Mammary epithelial cell (primary cell): ENCODE measurements at regions of chr18 and their contacts with region 1.

Region 1: GRCh38 chr18:49021433-49022129 is 70.8 kb upstream of the SMAD7 start:
- DNase-seq: peak; percentile 84
- H3K4me3 ChIP-seq: no peak overlapping the region
- H3K27ac ChIP-seq: no peak overlapping the region
- H3K4me1 ChIP-seq: peaks cover 27% of the 10 kb centered on the region
- H3K27me3 ChIP-seq: no peaks in the 10 kb centered on the region
- CTCF ChIP-seq: peak; percentile 28 to 44

Region 2: GRCh38 chr18:48868468-48869466 is 152.8 kb before region 1 on chr18:
- CTCF ChIA-PET with region 1: no interaction called
- dilution Hi-C with region 1: no loop called
- in situ Hi-C with region 1: no loop called
- intact Hi-C with region 1: no loop called
- DNase-seq: peak; percentile 5
- H3K4me3 ChIP-seq: no peak overlapping the region
- H3K27ac ChIP-seq: no peak overlapping the region
- H3K4me1 ChIP-seq: peaks cover 13% of the 10 kb centered on the region
- H3K27me3 ChIP-seq: no peaks in the 10 kb centered on the region
- CTCF ChIP-seq: no peak

Region 3: DNA sequence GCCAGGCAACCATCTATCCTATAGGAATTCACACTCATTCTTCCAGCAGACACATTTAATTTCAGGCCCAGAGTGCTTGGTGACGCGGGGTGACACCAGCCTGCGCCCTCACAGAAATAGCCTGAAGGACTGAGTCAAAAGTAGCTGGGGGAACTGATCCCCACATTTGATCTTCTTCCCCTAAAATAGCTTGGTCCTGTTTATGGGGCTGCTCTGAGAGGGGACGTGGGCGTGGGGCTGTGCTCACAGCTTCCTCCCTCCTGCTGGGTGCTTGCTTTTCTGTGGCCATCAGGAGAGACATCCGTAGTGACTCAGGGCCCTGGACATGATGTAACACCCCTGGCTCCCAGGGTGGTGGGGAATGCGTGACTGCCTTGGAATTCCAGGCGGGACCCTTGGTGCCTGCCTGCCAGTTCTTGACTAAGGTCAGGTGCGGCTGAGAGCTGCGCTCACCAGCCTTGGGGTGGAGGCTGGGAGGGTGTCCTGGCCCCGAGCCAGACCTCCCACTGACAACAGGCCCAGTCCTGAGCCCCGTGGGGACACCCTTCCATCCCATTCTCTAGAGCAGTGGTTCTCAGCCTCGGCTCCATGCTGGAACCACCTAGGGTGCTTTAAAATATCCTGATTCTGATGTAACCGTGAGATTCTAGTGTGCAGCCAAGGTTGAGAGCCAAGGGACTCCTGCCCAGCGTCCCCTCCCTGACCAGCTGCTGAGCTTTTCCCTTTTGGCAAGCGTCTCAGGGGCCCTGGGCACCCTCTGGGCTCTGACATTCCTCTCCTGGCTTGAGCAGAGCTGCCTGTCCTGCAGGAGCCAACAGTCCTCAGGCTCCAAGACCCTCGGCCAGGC is 23.4 kb before region 1 on chr18:
- CTCF ChIA-PET with region 1: no interaction called
- dilution Hi-C with region 1: no loop called
- in situ Hi-C with region 1: no loop called
- intact Hi-C with region 1: loop called (anchors 2 kb)
- DNase-seq: peak; percentile 96
- H3K4me3 ChIP-seq: no peak overlapping the region
- H3K27ac ChIP-seq: peak overlapping the region; percentile 90
- H3K4me1 ChIP-seq: peaks cover 25% of the 10 kb centered on the region
- H3K27me3 ChIP-seq: no peaks in the 10 kb centered on the region
- CTCF ChIP-seq: no peak

Region 4: DNA sequence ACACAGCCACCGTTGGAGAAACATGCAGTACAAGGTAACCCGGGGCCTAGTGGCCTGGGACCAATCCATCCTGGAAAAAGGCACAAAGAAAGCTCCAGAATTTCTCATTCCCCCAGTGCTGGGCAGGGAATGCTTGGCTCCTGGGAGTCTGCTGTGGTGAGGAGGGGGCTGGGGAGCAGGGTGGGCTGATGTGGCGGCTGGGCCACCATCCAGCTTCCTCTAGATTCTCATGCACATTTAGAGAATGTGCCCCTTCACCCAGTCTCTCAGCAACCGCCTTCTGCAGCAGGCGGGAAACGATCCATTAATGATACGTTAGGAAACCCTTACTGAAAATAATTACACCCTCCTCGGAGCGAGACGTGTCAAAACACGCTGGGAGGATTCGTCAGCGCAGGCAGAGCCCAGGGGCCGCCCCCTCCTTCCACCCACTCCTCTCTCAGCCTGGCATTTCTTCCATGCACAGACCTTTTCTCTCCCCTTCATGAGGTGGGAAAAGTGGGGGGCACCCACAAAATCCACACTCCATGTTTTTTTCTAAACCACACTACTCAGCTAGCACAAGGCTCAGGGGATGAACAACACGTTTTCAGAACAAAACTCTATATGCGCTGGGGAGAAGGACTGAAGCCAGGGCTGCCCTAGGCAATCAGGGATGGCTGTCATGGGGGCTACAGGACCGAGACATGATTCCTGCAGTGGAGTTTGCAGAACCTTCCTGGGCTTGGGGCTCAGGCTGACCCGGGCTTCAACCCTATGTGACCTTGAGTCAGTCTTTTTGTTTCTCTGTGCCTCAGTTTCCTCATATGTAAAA is 14.7 kb before region 1 on chr18:
- CTCF ChIA-PET with region 1: no interaction called
- dilution Hi-C with region 1: no loop called
- in situ Hi-C with region 1: no loop called
- intact Hi-C with region 1: loop called (anchors 1 kb)
- DNase-seq: peak; percentile 74
- H3K4me3 ChIP-seq: no peak overlapping the region
- H3K27ac ChIP-seq: peak overlapping the region; percentile 4
- H3K4me1 ChIP-seq: peaks cover 13% of the 10 kb centered on the region
- H3K27me3 ChIP-seq: no peaks in the 10 kb centered on the region
- CTCF ChIP-seq: no peak

Region 5: DNA sequence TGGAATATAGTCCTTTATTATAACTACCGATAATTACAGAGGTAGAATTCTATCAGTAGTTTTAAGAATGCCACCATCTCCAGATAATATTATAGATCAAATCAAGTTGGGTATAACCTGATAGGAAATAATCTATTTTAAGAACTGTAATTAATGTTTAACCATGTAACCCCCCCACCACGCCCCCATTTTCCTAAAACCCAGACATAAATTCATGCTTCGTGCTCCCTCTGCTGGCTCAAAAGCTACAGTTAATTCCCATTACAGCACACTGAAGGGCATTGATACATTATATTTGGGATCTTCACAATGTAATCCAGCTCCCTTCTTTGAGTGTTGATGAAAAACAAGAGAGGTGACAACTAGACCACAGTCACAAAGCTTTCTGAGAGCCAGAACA is 157.2 kb after region 1 on chr18:
- CTCF ChIA-PET with region 1: no interaction called
- dilution Hi-C with region 1: no loop called
- in situ Hi-C with region 1: no loop called
- intact Hi-C with region 1: loop called (anchors 10 kb)
- DNase-seq: no peak
- H3K4me3 ChIP-seq: no peak overlapping the region
- H3K27ac ChIP-seq: no peak overlapping the region
- H3K4me1 ChIP-seq: peaks cover 5% of the 10 kb centered on the region
- H3K27me3 ChIP-seq: no peaks in the 10 kb centered on the region
- CTCF ChIP-seq: peak; percentile 52 to 64

Region 6: GRCh38 chr18:49238433-49239042 is 217.0 kb after region 1 on chr18:
- CTCF ChIA-PET with region 1: no interaction called
- dilution Hi-C with region 1: no loop called
- in situ Hi-C with region 1: no loop called
- intact Hi-C with region 1: loop called (anchors 2 kb)
- DNase-seq: no peak
- H3K4me3 ChIP-seq: no peak overlapping the region
- H3K27ac ChIP-seq: no peak overlapping the region
- H3K4me1 ChIP-seq: peaks cover 2% of the 10 kb centered on the region
- H3K27me3 ChIP-seq: no peaks in the 10 kb centered on the region
- CTCF ChIP-seq: peak; percentile 44 to 53

Region 7: DNA sequence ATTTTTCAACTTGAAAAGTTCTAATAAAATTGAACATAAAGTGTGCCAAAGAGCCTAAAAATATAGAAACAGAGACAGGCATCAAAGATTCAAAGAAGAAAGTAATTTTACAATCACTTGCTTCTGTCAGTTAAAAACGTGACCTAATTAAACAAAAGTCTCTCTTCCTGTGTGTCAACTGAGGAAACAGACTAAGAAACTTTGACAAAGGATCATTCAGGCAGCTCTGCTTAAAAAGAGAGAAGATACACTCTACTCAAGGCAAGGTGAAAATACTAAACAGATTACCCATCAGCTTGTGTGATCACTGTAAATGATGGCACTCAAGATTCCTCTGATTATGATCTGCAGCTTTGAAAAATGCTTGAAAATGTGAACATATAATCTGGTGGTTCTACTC is 391.1 kb after region 1 on chr18:
- CTCF ChIA-PET with region 1: no interaction called
- dilution Hi-C with region 1: no loop called
- in situ Hi-C with region 1: no loop called
- intact Hi-C with region 1: loop called (anchors 10 kb)
- DNase-seq: no peak
- H3K4me3 ChIP-seq: no peak overlapping the region
- H3K27ac ChIP-seq: no peak overlapping the region
- H3K4me1 ChIP-seq: no peaks in the 10 kb centered on the region
- H3K27me3 ChIP-seq: no peaks in the 10 kb centered on the region
- CTCF ChIP-seq: no peak